CD4-positive, alpha-beta T cell (primary cell): ENCODE measurements at regions of chr11 and their contacts with region 1.

Region 1: DNA sequence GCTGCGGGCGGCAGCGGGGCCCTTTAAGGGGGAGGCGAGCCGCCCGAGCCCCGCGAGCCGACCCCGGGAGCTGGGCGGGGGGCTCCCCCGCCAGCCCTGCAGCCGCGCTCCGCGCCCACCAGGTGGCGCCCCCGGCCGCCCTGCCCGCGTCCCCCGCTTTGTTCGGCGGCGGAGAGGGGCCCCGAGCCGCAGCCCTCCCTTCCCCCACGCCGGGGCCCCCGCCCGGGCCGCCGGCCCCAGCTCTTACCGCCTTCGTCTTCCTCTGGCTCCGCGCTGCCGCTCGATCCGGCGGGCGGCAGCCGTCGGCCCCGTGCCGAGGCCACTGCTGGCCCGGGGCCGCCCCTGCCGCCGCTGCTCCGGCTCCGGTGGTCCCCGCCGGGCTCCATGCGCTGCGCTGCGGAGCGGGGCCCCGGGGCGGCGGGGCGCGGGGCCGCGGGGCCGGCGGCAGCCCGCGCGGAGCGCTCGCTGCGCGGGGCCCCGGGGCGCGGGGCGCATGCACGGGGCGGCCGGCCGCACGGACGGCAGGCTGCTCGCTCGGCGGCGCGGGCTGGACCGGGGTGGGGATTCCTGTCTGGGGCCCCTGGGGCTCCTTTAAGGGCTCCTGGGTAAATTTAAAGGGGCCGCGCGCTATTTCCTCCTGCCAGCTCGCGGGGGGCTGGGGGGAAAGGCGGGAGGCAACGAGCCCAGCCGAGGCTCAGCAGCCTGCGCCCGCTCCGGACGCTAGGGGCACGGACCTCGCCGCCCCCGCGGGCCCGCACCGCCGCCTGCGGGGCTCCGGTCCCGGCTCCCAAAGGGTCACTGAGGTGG is at the start of gene ZFTA:
- DNase-seq: peak; percentile 21 to 81 (median 52)
- ATAC-seq: peak; percentile 68
- H3K4me3 ChIP-seq: peak within 1 kb of the TSS; percentile 82
- H3K4me3 Mint-ChIP-seq: peak within 1 kb of the TSS; percentile 97
- H3K27ac ChIP-seq: no peak within 1 kb of the TSS
- H3K27ac Mint-ChIP-seq: peak within 1 kb of the TSS; percentile 16
- H3K4me1 ChIP-seq: peaks cover 20% of the 10 kb centered on the region
- H3K4me1 Mint-ChIP-seq: peaks cover 13% of the 10 kb centered on the region
- H3K27me3 ChIP-seq: peaks cover 10 to 19% of the 10 kb centered on the region in 2 experiments
- H3K27me3 Mint-ChIP-seq: peaks cover 11% of the 10 kb centered on the region
- CTCF ChIP-seq: no peak
- total RNA-seq, gene ZFTA: 0.95 to 1.0 TPM

Region 2: DNA sequence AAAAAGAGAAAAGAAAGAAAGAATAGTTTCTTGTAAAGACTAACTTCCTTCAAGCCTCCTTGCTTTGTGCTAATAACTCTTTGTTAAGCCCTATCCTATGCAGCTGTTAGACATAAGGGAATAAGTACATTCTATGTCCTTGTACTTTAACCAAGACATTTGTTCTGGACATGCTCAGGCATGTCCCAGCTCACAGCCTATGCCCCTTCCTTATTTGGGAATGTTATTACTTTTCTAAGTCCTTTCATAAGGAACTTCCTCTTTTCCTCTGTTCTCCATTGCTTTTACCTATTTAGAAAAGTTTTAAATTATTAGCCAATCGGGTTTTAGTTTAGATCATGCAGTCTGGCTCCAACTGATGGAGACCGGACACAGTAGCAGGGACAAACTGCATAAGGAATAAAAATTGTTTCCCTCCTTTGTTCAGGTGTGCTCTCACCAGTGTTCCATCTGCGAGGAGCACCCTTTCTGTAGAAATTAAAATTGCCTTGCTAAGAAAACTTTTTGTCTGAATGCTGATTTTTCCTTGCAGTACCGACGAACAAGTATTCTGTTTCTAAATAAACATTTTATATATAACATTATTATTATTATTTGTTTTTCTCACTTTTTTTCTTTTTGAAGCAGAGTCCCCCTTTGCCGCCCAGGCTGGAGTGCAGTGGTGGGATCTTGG is 23.2 kb after region 1 on chr11:
- CTCF ChIA-PET with region 1: no interaction called
- POLR2A ChIA-PET with region 1: no interaction called
- intact Hi-C with region 1: no loop called
- DNase-seq: no peak
- ATAC-seq: no peak
- H3K4me3 ChIP-seq: no peak overlapping the region
- H3K4me3 Mint-ChIP-seq: no peak overlapping the region
- H3K27ac ChIP-seq: no peak overlapping the region
- H3K27ac Mint-ChIP-seq: no peak overlapping the region
- H3K4me1 ChIP-seq: no peaks in the 10 kb centered on the region
- H3K4me1 Mint-ChIP-seq: no peaks in the 10 kb centered on the region
- H3K27me3 ChIP-seq: no peaks in the 10 kb centered on the region
- H3K27me3 Mint-ChIP-seq: peaks cover 4% of the 10 kb centered on the region
- CTCF ChIP-seq: no peak

Region 3: GRCh38 chr11:63813035-63813562 is 44.7 kb after region 1 on chr11 and contains the start of gene SPINDOC:
- CTCF ChIA-PET with region 1: no interaction called
- POLR2A ChIA-PET with region 1: no interaction called
- intact Hi-C with region 1: loop called in 1 of 2 experiments (anchors 2 kb)
- DNase-seq: peak; percentile 28 to 85 (median 62)
- ATAC-seq: peak; percentile 85
- H3K4me3 ChIP-seq: peak within 1 kb of the TSS; percentile 97
- H3K4me3 Mint-ChIP-seq: peak within 1 kb of the TSS; percentile 81
- H3K27ac ChIP-seq: no peak within 1 kb of the TSS
- H3K27ac Mint-ChIP-seq: peak within 1 kb of the TSS; percentile 1
- H3K4me1 ChIP-seq: peaks cover 17% of the 10 kb centered on the region
- H3K4me1 Mint-ChIP-seq: peaks cover 20% of the 10 kb centered on the region
- H3K27me3 ChIP-seq: no peaks in the 10 kb centered on the region
- H3K27me3 Mint-ChIP-seq: no peaks in the 10 kb centered on the region
- CTCF ChIP-seq: no peak
- total RNA-seq, gene SPINDOC: 4.0 to 4.8 TPM

Region 4: DNA sequence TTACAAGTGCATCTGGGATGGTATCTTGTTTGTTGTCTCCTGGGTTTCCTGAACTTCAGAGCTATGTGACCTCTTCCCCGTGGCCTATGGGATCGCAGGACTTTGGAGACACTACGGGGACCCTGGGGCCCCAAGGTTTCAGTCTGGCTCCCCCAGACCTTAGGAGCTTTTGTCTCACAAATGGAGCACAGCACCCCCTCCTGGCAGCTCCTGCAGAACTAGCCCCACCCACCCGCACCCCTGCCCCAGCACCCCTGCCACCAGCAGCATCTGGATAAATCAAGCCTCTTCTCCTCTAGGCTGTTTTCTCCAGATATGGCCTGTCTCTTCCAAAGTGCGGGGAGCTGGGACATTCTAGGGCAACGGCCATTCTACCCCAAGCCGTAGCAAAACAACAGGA is 138.1 kb after region 1 on chr11:
- CTCF ChIA-PET with region 1: no interaction called
- POLR2A ChIA-PET with region 1: no interaction called
- intact Hi-C with region 1: loop called in 1 of 2 experiments (anchors 10 kb)
- DNase-seq: peak; percentile 47 to 79 (median 60)
- ATAC-seq: peak; percentile 82
- H3K4me3 ChIP-seq: no peak overlapping the region
- H3K4me3 Mint-ChIP-seq: no peak overlapping the region
- H3K27ac ChIP-seq: no peak overlapping the region
- H3K27ac Mint-ChIP-seq: peak overlapping the region; percentile 36
- H3K4me1 ChIP-seq: no peaks in the 10 kb centered on the region
- H3K4me1 Mint-ChIP-seq: no peaks in the 10 kb centered on the region
- H3K27me3 ChIP-seq: no peaks in the 10 kb centered on the region
- H3K27me3 Mint-ChIP-seq: no peaks in the 10 kb centered on the region
- CTCF ChIP-seq: peak; percentile 59

Region 5: DNA sequence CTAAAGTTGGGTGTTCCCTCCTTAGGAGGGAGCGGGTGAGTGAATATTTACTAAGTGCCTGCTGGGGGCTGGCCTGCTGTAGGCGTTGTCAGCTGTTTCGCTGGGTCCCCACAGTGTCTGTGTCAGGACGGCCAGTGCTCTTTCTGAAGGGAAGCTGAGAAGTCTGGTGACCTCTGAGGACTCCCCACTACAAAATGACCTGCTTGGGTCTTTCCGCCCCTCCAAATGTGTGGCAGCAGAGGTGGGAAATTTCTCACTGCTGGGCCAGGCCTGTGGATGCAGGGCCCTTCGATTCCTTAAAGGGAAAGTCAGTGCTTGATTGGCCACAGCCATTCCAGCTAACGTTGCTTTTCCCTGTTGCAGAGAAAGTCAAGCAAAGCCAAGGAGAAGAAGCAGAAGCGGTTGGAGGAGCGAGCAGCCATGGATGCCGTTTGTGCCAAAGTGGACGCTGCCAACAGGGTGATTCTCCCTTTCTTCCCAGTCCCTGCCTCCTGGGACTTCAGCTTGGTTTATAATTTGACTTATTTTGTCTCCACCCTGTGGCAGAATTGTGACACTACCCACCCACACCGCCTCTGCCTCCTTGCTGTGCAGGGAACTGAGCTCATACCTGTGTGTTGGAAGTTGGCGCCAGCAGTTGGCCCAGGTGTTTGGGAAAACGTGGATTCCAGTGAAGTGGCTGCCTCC is 177.2 kb after region 1 on chr11:
- CTCF ChIA-PET with region 1: interaction called, 9 read pairs
- POLR2A ChIA-PET with region 1: no interaction called
- intact Hi-C with region 1: loop called in 1 of 2 experiments (anchors 2 kb)
- DNase-seq: peak in 13 of 14 experiments; percentile 29 to 74 (median 43)
- ATAC-seq: peak; percentile 72
- H3K4me3 ChIP-seq: no peak overlapping the region
- H3K4me3 Mint-ChIP-seq: no peak overlapping the region
- H3K27ac ChIP-seq: no peak overlapping the region
- H3K27ac Mint-ChIP-seq: no peak overlapping the region
- H3K4me1 ChIP-seq: peaks cover under 1% of the 10 kb centered on the region
- H3K4me1 Mint-ChIP-seq: peaks cover 8% of the 10 kb centered on the region
- H3K27me3 ChIP-seq: no peaks in the 10 kb centered on the region
- H3K27me3 Mint-ChIP-seq: no peaks in the 10 kb centered on the region
- CTCF ChIP-seq: peak; percentile 70